Activated CD8-positive, alpha-beta T cell treated with anti-CD3 and anti-CD28 coated beads, Interleukin-2, amount 10 ng/mL, durations not matched to agents 7 days and 5 days (primary cell): ENCODE measurements at regions of chr17 and their contacts with region 1.

Region 1: DNA sequence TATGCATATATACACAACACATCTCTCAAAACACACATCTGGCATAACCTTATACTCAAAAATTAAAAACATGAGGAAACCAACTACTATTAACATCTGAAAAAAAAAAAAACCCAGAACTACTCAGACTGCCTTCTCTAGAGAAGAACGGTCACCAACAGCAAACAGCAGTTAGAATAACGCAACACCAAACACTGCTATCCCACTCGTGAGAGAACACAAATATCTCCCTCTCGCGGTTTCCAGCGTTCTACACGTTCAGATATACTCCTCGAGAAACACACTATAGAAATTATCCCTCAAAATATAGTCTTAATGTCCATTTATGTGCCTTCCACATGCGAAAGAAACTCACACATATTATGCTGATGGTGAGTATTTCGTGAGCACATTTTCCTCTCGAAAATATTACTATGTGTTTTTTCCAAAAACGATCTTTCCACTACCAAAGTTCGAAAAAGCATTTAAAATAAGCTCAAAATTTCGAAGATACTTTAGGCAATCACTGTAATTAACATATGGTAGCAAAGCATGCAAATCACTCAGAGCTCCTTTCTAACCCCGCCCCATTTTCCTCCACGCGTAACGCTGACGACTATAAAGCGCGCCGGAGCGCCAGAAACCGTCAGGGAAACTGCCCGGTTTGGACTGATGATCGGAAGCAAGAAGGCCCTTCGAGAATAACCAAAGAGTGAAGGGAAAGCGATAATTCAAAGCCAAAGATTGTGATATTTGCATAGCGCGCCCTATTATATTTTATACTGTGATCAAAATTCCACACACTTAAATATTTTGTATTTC is 60.1 kb downstream of the TEX14 start:
- DNase-seq: peak; percentile 97
- ATAC-seq: peak; percentile 89
- H3K4me3 Mint-ChIP-seq: no peak overlapping the region
- H3K27ac Mint-ChIP-seq: no peak overlapping the region
- H3K4me1 Mint-ChIP-seq: peaks cover 10% of the 10 kb centered on the region
- H3K27me3 Mint-ChIP-seq: no peaks in the 10 kb centered on the region

Region 2: GRCh38 chr17:58517734-58518609 is 113.8 kb before region 1 on chr17:
- CTCF ChIA-PET with region 1: interaction called, 13 read pairs
- POLR2A ChIA-PET with region 1: interaction called, 64 read pairs
- DNase-seq: peak; percentile 100
- ATAC-seq: peak; percentile 86
- H3K4me3 Mint-ChIP-seq: peak overlapping the region; percentile 89
- H3K27ac Mint-ChIP-seq: peak overlapping the region; percentile 97
- H3K4me1 Mint-ChIP-seq: peaks cover 51% of the 10 kb centered on the region
- H3K27me3 Mint-ChIP-seq: no peaks in the 10 kb centered on the region

Region 3: GRCh38 chr17:58587702-58588254 is 43.9 kb before region 1 on chr17:
- CTCF ChIA-PET with region 1: interaction called, 19 read pairs
- POLR2A ChIA-PET with region 1: interaction called, 48 read pairs
- DNase-seq: peak; percentile 66
- ATAC-seq: peak; percentile 76
- H3K4me3 Mint-ChIP-seq: no peak overlapping the region
- H3K27ac Mint-ChIP-seq: no peak overlapping the region
- H3K4me1 Mint-ChIP-seq: no peaks in the 10 kb centered on the region
- H3K27me3 Mint-ChIP-seq: peaks cover 10% of the 10 kb centered on the region

Region 4: DNA sequence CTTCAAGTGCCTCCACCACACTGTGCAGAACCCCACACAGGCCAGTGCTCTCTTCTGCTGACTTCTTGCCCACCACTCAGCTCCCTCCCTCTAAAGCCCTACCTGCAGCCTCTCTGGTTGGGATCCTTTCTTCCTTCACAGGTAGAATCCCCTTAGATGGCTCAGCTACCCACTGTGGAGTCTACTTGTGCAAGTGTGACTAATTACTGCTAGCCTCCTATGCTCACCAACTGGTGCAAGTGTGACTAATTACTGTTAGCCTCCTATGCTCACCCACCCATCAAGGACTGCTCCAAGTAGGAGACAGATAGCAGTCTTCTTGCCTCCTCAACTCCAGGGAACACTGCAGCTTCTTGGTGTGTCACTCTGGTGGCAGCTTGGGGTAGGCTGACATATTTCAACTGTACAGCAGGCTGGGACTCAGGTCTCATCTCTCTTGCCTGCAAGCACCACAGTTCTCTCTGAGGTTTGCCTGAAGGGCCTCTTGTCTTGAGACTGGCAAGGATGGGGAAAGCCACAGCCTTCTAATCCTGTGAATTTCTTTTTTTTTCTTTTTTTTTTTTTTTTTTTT is 16.6 kb after region 1 on chr17:
- CTCF ChIA-PET with region 1: interaction called, 3 read pairs
- POLR2A ChIA-PET with region 1: interaction called, 111 read pairs
- DNase-seq: no peak
- ATAC-seq: no peak
- H3K4me3 Mint-ChIP-seq: no peak overlapping the region
- H3K27ac Mint-ChIP-seq: no peak overlapping the region
- H3K4me1 Mint-ChIP-seq: no peaks in the 10 kb centered on the region
- H3K27me3 Mint-ChIP-seq: peaks cover 2% of the 10 kb centered on the region

Region 5: DNA sequence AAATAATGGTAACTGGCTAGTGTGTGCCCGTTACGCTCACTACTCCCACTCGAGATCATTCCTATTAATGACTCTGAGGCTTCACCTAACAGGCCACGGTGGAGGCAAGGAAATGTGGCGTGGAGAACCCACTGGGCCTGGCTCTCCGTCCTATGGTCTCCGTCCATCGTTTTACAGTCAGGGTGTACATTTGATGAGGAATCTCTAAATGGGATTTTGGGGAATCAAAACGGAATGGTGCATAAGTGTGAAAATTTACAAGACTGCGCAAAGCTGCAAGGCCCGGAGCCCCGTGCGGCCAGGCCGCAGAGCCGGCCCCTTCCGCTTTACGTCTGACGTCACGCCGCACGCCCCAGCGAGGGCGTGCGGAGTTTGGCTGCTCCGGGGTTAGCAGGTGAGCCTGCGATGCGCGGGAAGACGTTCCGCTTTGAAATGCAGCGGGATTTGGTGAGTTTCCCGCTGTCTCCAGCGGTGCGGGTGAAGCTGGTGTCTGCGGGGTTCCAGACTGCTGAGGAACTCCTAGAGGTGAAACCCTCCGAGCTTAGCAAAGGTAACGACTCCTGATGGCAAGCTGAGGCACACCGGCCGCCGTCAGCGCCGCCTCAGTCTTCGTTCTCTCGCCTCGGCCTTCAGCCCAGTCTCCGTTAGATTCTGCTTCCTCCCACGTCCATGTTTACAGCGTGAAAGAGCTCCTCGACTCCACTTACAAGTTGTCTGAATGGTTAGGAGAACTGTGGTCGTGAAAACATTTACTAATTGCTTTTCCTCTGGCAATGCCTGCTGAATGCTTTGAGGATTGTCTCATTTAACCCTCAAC is 60.7 kb after region 1 on chr17 and contains the start of gene RAD51C:
- CTCF ChIA-PET with region 1: interaction called, 3 read pairs
- POLR2A ChIA-PET with region 1: interaction called, 126 read pairs
- DNase-seq: peak; percentile 93
- ATAC-seq: peak; percentile 97
- H3K4me3 Mint-ChIP-seq: peak within 1 kb of the TSS; percentile 95
- H3K27ac Mint-ChIP-seq: peak within 1 kb of the TSS; percentile 97
- H3K4me1 Mint-ChIP-seq: peaks cover 35% of the 10 kb centered on the region
- H3K27me3 Mint-ChIP-seq: peaks cover 3% of the 10 kb centered on the region
- total RNA-seq, gene RAD51C: 70.6 to 70.8 TPM

Region 6: GRCh38 chr17:58728786-58729185 is 97.1 kb after region 1 on chr17:
- CTCF ChIA-PET with region 1: no interaction called
- POLR2A ChIA-PET with region 1: no interaction called
- DNase-seq: no peak
- ATAC-seq: no peak
- H3K4me3 Mint-ChIP-seq: no peak overlapping the region
- H3K27ac Mint-ChIP-seq: no peak overlapping the region
- H3K4me1 Mint-ChIP-seq: peaks cover 3% of the 10 kb centered on the region
- H3K27me3 Mint-ChIP-seq: no peaks in the 10 kb centered on the region

Region 7: DNA sequence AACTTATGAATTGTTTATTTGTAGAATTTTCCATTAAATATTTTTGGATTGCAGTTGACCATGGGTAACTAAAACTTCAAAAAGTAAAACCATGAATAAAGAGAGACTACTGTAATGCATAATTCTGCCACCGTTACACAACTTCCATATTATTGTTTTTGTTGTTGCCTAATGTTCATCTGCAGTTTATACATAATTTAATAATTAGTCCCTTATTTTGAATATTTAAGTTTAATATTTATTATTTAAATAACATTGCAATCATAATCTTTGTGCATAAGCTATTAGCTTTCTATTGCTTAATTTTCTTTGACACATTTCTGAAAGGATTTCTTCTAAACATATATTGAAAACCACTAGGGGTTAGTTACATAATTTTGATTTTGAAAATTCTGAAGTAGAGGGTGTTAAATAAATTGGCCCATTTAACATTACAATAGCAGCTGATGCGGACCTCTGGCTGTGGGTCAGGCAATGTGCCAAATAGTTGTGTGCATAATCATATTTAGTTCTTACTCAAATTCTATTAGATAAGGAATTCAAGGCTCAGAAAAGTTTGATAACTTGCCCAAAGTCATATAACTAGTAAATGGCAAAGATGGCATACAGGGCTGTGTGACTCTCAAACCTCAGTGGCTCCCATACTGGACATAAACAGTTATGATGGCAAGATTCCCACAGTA is 155.0 kb after region 1 on chr17:
- CTCF ChIA-PET with region 1: no interaction called
- POLR2A ChIA-PET with region 1: no interaction called
- DNase-seq: no peak
- ATAC-seq: no peak
- H3K4me3 Mint-ChIP-seq: no peak overlapping the region
- H3K27ac Mint-ChIP-seq: no peak overlapping the region
- H3K4me1 Mint-ChIP-seq: no peaks in the 10 kb centered on the region
- H3K27me3 Mint-ChIP-seq: peaks cover 5% of the 10 kb centered on the region